ENCODE measurements at regions of chr12 and their contacts with region 1.

Region 1: GRCh38 chr12:106309671-106310505 is 7.4 kb downstream of the TCP11L2 start:
- DNase-seq: peak; percentile 47
- H3K4me3 Mint-ChIP-seq: peak overlapping the region; percentile 33
- H3K27ac Mint-ChIP-seq: peak overlapping the region; percentile 29
- H3K4me1 Mint-ChIP-seq: peaks cover 44% of the 10 kb centered on the region
- H3K27me3 Mint-ChIP-seq: no peaks in the 10 kb centered on the region
- CTCF ChIP-seq: no peak

Region 2: GRCh38 chr12:106345739-106346138 is 35.9 kb after region 1 on chr12:
- CTCF ChIA-PET with region 1: no interaction called
- intact Hi-C with region 1: loop called (anchors 2 kb)
- DNase-seq: peak; percentile 65
- H3K4me3 Mint-ChIP-seq: no peak overlapping the region
- H3K27ac Mint-ChIP-seq: no peak overlapping the region
- H3K4me1 Mint-ChIP-seq: peaks cover 19% of the 10 kb centered on the region
- H3K27me3 Mint-ChIP-seq: peaks cover 15% of the 10 kb centered on the region
- CTCF ChIP-seq: peak; percentile 52